CD8-positive, alpha-beta memory T cell (primary cell): ENCODE measurements at regions of chr11 and their contacts with region 1.

Region 1: DNA sequence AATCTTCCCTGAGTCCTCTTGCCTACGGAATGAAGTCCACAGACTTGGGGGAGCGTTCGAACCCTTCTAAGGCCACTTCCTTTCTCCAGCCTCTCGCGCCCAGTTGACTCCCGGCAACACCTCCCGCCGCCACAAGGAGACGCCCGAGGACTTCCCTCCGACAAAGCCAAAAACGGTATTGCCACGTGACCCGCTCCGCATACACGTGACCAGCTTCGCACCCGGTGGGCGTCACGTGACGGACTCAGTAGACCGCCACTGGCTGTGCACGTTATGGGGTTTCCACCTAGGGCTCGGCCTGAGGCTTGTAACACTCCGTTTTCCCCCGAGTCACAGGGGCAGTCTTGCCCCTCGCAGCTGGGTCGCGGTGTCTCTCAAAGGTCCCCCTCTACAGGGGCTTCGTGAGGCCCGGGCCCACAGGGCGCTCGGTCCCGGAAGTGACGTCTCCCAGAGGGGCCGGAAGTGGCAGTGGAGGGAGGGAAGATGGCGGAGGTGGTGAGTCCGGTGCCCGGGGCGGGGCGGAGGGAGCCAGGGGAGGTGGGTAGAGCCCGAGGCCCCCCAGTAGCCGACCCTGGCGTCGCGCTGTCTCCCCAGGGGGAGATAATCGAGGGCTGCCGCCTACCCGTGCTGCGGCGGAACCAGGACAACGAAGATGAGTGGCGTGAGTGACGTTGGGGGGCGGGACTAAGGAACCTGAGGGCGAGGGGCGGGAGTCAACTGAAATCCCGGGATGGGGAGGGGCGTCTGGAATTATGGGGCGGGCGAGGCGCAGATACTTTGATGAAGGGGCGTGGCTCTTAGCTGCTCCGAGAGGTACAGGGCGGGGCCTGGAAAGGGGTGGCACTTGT is at the start of gene KAT5:
- DNase-seq: peak; percentile 97 to 99 (median 98)
- H3K4me3 ChIP-seq: peak within 1 kb of the TSS; percentile 74
- H3K4me3 Mint-ChIP-seq: peak within 1 kb of the TSS; percentile 94 to 99 (median 96)
- H3K27ac ChIP-seq: peak within 1 kb of the TSS; percentile 94
- H3K27ac Mint-ChIP-seq: peak within 1 kb of the TSS; percentile 98 to 100 (median 99)
- H3K4me1 ChIP-seq: peaks cover 19% of the 10 kb centered on the region
- H3K4me1 Mint-ChIP-seq: peaks cover 20 to 32% (median 20%) of the 10 kb centered on the region in 3 donors
- H3K27me3 ChIP-seq: no peaks in the 10 kb centered on the region
- H3K27me3 Mint-ChIP-seq: no peaks in the 10 kb centered on the region
- total RNA-seq, gene KAT5: 79.9 to 87.1 TPM

Region 2: DNA sequence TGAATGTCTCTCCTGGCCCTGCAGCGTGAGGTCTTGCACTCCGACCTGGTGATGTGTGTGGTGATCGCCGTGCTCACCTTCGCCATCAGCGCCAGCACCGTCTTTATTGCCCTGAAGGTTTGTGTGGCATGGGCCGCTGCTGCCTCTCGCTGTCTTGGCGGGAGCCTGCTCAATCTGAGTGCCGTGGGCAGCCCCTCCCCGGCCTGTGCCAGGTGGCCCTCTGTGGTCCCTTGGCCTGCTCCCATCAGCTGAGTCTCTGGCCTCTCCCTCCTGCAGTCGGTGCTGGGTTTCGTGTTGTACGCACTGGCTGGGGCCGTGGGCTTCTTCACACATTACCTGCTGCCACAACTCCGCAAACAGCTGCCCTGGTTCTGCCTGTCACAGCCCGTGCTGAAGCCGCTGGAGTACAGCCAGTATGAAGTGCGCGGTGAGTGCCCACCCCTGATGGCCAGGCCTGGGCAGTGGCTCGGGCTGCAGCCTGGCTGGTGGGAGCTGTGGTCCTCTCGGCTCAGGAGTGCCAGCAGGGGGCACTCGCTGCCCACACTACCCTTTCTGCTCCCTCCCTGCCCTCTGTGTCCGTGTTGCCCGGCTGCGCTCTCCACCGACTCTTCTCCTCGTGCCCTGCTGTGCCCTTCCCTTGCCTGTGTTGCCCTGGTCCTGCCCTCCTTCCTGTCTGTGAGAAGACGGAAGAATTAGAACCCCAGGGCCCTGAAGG is 86.2 kb before region 1 on chr11:
- CTCF ChIA-PET with region 1: interaction called, 18 read pairs
- POLR2A ChIA-PET with region 1: no interaction called
- DNase-seq: peak; percentile 48 to 73 (median 57)
- H3K4me3 ChIP-seq: no peak overlapping the region
- H3K4me3 Mint-ChIP-seq: no peak overlapping the region
- H3K27ac ChIP-seq: no peak overlapping the region
- H3K27ac Mint-ChIP-seq: peak overlapping the region; percentile 10 to 84 (median 71)
- H3K4me1 ChIP-seq: peaks cover 7% of the 10 kb centered on the region
- H3K4me1 Mint-ChIP-seq: peaks cover 4 to 14% (median 6%) of the 10 kb centered on the region in 3 donors
- H3K27me3 ChIP-seq: no peaks in the 10 kb centered on the region
- H3K27me3 Mint-ChIP-seq: no peaks in the 10 kb centered on the region

Region 3: GRCh38 chr11:65779851-65780577 is 68.0 kb after region 1 on chr11:
- CTCF ChIA-PET with region 1: interaction called, 12 read pairs
- POLR2A ChIA-PET with region 1: no interaction called
- DNase-seq: peak; percentile 66 to 83 (median 75)
- H3K4me3 ChIP-seq: peak overlapping the region; percentile 76
- H3K4me3 Mint-ChIP-seq: peak overlapping the region; percentile 68 to 92 (median 84)
- H3K27ac ChIP-seq: peak overlapping the region; percentile 64
- H3K27ac Mint-ChIP-seq: peak overlapping the region in 7 of 8 donors; percentile 23 to 87 (median 61)
- H3K4me1 ChIP-seq: peaks cover 12% of the 10 kb centered on the region
- H3K4me1 Mint-ChIP-seq: peaks cover 1 to 35% (median 6%) of the 10 kb centered on the region in 3 donors
- H3K27me3 ChIP-seq: no peaks in the 10 kb centered on the region
- H3K27me3 Mint-ChIP-seq: no peaks in the 10 kb centered on the region

Region 4: DNA sequence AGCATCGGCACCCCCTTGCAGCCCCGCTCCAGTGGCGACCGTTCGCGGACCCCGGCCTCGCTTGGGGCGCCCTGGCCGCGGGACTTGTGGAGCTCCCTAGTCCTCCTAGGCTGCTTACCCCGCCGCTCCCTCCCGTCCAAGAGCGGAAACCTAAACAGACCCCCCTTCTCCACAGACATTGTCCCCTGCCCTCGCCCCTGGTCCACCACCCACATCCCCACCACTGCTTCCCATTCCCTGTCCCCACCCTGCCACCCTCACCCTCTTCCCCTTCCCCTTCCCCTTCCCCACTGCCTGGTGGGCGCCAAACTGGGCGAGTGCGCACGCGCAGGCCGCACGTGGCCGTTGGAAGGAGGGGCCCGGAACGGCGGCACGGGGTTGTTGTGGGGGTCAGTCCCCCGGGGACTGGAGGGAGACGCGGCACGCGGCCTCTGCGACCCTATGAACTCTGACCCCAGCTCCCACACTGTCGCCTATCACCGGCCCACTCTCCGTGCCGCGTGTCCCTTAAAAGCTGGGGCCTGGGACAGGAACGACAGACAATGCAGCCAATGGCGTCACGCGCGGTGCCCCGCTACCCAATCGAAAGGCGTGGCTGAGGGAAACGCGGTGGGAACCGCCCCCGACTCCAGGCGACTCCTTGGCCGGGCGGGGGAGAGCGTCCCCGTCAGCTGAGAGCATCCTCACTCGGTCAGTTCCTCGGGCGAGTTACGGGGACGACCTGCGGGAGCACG is 121.5 kb after region 1 on chr11 and contains the start of gene SNX32:
- CTCF ChIA-PET with region 1: interaction called, 10 read pairs
- POLR2A ChIA-PET with region 1: interaction called, 6 read pairs
- DNase-seq: peak; percentile 90 to 94 (median 91)
- H3K4me3 ChIP-seq: peak within 1 kb of the TSS; percentile 57
- H3K4me3 Mint-ChIP-seq: no peak within 1 kb of the TSS
- H3K27ac ChIP-seq: no peak within 1 kb of the TSS
- H3K27ac Mint-ChIP-seq: peak within 1 kb of the TSS in 6 of 8 donors; percentile 15 to 79 (median 67)
- H3K4me1 ChIP-seq: peaks cover 16% of the 10 kb centered on the region
- H3K4me1 Mint-ChIP-seq: peaks cover 8 to 14% (median 13%) of the 10 kb centered on the region in 3 donors
- H3K27me3 ChIP-seq: no peaks in the 10 kb centered on the region
- H3K27me3 Mint-ChIP-seq: peaks cover 0 to 2% of the 10 kb centered on the region in 2 donors
- total RNA-seq, gene SNX32: 2.0 to 2.8 TPM

Region 5: DNA sequence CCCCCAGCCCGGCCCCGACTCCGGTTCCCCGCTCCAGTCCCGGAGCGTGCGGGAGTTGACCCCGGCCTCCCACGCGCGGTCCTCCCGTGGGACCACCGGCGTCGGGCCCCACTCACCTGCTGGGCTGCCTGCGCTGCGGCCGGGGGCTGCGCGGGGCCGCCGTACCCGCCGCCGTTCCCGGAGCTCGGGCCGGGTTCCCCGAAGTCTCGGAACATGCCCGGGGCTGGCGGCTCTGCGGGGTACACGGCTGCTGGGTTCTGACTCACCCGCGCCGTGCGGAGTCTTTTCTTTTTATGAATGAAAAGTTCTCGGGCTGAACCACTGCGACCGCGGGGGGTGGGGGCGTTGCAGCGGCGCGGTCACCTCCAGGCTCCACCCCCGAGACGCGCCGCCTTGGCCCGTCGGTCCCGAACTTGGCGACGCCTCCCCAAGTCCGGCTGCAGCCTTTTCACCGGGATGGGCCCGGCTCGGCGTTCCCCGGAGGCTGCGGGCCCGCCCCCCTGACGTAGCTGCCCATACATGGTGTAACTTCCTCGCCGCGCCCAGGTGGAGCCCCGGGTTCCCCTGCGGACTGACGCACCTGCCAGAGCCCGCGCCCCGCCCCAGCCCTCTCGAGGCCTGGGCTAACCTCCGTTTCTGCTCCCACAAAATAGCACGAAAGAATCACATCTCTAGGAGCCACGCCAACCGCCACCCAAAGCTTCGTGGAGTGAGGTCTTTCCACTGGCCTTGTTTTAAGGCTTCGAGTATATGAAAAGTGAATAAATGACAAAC is 188.3 kb after region 1 on chr11 and contains the start of gene FOSL1:
- CTCF ChIA-PET with region 1: no interaction called
- POLR2A ChIA-PET with region 1: no interaction called
- DNase-seq: peak; percentile 90 to 95 (median 93)
- H3K4me3 ChIP-seq: peak within 1 kb of the TSS; percentile 50
- H3K4me3 Mint-ChIP-seq: peak within 1 kb of the TSS; percentile 53 to 83 (median 58)
- H3K27ac ChIP-seq: peak within 1 kb of the TSS; percentile 62
- H3K27ac Mint-ChIP-seq: peak within 1 kb of the TSS in 7 of 8 donors; percentile 36 to 92 (median 88)
- H3K4me1 ChIP-seq: peaks cover 24% of the 10 kb centered on the region
- H3K4me1 Mint-ChIP-seq: peaks cover 8 to 13% (median 11%) of the 10 kb centered on the region in 3 donors
- H3K27me3 ChIP-seq: peaks cover 6% of the 10 kb centered on the region
- H3K27me3 Mint-ChIP-seq: no peaks in the 10 kb centered on the region
- total RNA-seq, gene FOSL1: 26.4 to 26.9 TPM

Region 6: DNA sequence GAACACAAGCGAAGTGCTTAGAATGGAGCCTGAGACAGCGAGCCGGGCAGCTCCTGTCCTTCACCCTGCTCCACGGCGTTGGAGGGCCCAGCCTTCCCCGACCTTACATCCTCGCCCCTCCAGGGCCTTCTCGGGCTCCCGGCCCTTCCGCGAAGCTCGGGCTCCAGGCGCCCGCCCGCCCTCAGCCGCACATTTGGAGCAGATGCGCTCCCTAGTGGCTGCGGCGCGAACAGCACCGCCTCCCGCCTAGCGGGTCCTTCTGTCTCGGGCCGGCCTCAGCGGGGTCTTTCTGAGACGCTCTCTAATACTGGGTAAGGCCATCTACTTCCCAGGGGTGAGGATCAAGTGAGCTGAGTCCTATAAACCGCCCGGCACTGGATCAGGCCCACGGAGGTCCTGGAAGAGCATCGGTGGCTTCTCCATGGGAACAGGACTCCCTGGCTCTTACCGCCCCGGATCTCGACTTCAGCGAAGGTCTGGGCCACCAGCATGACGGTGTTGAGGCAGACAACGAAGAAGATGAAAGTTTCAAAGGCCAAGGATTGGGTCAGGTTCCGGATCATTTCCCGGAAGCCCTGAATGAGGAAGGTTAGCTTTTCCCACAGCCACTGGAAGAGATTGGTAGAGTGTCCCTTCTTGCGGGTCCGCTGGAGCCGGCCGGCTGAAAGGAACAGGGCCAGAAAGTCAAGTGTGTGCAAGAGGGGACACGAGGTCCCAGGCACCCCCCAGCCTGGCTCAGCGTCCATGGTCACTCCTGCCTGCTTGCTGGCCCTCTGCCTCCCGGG is 310.6 kb after region 1 on chr11:
- CTCF ChIA-PET with region 1: interaction called, 9 read pairs
- POLR2A ChIA-PET with region 1: interaction called, 17 read pairs
- DNase-seq: peak; percentile 63 to 80 (median 71)
- H3K4me3 ChIP-seq: no peak overlapping the region
- H3K4me3 Mint-ChIP-seq: peak overlapping the region in 5 of 7 donors; percentile 27 to 51 (median 28)
- H3K27ac ChIP-seq: no peak overlapping the region
- H3K27ac Mint-ChIP-seq: no peak overlapping the region
- H3K4me1 ChIP-seq: peaks cover 7% of the 10 kb centered on the region
- H3K4me1 Mint-ChIP-seq: peaks cover 5 to 9% (median 6%) of the 10 kb centered on the region in 3 donors
- H3K27me3 ChIP-seq: no peaks in the 10 kb centered on the region
- H3K27me3 Mint-ChIP-seq: peaks cover 3 to 8% of the 10 kb centered on the region in 2 donors

Region 7: DNA sequence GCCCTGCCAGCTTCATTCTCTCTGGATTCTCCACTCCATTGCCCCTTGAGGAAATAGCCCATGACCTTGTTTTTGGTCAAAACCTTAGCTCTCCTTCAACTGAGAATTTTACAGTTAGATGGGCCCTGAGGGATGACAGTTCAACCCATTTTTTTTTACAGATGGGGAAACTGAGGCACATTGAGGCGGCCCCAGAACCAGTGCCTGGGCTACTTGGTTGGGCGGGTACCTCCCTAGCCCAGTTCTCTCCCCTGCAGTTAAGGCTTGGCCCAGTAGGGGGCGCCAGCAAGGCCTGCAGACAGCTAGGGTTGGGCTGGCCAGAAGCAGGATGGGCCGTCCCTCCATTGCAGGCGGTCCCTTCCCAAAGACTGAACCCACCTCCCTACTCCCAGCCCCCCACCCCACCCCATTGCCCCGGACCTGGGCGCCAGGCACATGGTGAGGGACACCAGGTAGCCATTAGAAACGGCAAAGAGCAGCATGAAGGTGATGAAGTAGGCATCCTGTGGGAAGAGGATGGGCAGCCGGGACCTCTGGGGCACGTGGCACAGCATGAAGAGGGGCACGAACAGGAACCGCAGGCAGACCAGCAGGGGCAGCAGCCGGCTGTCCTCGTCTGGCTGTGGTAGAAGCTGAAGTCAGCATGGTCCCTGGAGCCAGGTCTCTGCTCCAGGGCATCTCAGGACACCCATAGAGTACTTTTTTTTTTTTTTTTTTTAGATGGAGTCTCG is 652.0 kb after region 1 on chr11:
- CTCF ChIA-PET with region 1: no interaction called
- POLR2A ChIA-PET with region 1: no interaction called
- DNase-seq: peak; percentile 36 to 71 (median 55)
- H3K4me3 ChIP-seq: no peak overlapping the region
- H3K4me3 Mint-ChIP-seq: no peak overlapping the region
- H3K27ac ChIP-seq: no peak overlapping the region
- H3K27ac Mint-ChIP-seq: no peak overlapping the region
- H3K4me1 ChIP-seq: no peaks in the 10 kb centered on the region
- H3K4me1 Mint-ChIP-seq: peaks cover 0 to 2% (median 0%) of the 10 kb centered on the region in 3 donors
- H3K27me3 ChIP-seq: no peaks in the 10 kb centered on the region
- H3K27me3 Mint-ChIP-seq: no peaks in the 10 kb centered on the region